ENCODE measurements at regions of chr2 and their contacts with region 1.

Region 1: GRCh38 chr2:85538486-85539360 is at the start of gene MAT2A:
- DNase-seq: peak; percentile 65 to 92 (median 86)
- ATAC-seq: peak; percentile 71
- H3K4me3 ChIP-seq: peak within 1 kb of the TSS; percentile 97
- H3K4me3 Mint-ChIP-seq: peak within 1 kb of the TSS; percentile 94
- H3K27ac ChIP-seq: peak within 1 kb of the TSS; percentile 80 to 84
- H3K27ac Mint-ChIP-seq: peak within 1 kb of the TSS; percentile 92
- H3K4me1 ChIP-seq: peaks cover 29% of the 10 kb centered on the region
- H3K4me1 Mint-ChIP-seq: peaks cover 52% of the 10 kb centered on the region
- H3K27me3 ChIP-seq: no peaks in the 10 kb centered on the region
- H3K27me3 Mint-ChIP-seq: no peaks in the 10 kb centered on the region
- CTCF ChIP-seq: peak; percentile 47
- total RNA-seq, gene MAT2A: 121 to 122 TPM

Region 2: DNA sequence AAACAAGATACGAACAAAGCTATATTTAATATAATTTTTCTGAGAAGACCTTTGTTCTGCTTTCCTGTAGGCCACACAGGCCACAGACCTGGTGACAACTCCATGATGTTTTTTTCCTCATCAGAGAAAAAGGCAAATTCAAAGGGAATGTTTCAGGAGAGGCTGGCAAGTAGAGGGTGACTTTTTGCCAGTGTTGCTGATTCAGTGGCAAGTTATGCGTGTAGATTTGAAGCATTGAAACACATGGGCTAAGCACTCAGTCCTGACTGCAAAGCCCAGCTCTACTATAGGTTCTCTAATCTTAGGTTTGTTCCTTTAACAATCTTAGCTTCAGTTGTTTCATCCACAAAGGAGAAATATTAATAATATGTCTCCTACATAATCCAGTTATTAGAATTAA is 1579.5 kb before region 1 on chr2:
- CTCF ChIA-PET with region 1: no interaction called
- POLR2A ChIA-PET with region 1: no interaction called
- intact Hi-C with region 1: no loop called
- DNase-seq: no peak
- ATAC-seq: no peak
- H3K4me3 ChIP-seq: no peak overlapping the region
- H3K4me3 Mint-ChIP-seq: no peak overlapping the region
- H3K27ac ChIP-seq: no peak overlapping the region
- H3K27ac Mint-ChIP-seq: no peak overlapping the region
- H3K4me1 ChIP-seq: no peaks in the 10 kb centered on the region
- H3K4me1 Mint-ChIP-seq: no peaks in the 10 kb centered on the region
- H3K27me3 ChIP-seq: no peaks in the 10 kb centered on the region
- H3K27me3 Mint-ChIP-seq: no peaks in the 10 kb centered on the region
- CTCF ChIP-seq: no peak

Region 3: DNA sequence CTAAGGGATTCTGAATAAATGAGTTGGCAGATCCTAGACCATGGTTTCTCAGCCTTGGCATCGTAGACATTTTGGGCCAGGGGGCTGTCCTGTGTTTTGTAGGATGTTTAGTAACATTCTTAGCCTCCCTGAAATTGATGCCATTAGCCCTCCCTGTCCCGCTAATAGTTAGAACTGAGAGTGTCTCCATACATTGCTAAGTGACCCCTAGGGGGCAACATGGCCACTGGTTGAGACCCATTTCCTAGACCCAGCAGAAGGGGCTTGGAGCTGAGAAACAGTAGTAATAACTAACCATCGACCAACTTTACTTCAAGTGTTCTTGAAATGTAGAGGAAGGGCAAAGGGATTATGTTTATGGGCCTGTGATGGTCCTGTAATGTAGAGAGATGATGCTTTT is 527.0 kb before region 1 on chr2:
- CTCF ChIA-PET with region 1: no interaction called
- POLR2A ChIA-PET with region 1: no interaction called
- intact Hi-C with region 1: loop called in 1 of 2 experiments (anchors 5 kb)
- DNase-seq: peak in 1 of 14 experiments; percentile 27
- ATAC-seq: no peak
- H3K4me3 ChIP-seq: no peak overlapping the region
- H3K4me3 Mint-ChIP-seq: no peak overlapping the region
- H3K27ac ChIP-seq: no peak overlapping the region
- H3K27ac Mint-ChIP-seq: peak overlapping the region; percentile 22
- H3K4me1 ChIP-seq: peaks cover 28% of the 10 kb centered on the region
- H3K4me1 Mint-ChIP-seq: peaks cover 88% of the 10 kb centered on the region
- H3K27me3 ChIP-seq: no peaks in the 10 kb centered on the region
- H3K27me3 Mint-ChIP-seq: no peaks in the 10 kb centered on the region
- CTCF ChIP-seq: no peak

Region 4: GRCh38 chr2:85420536-85421259 is 118.0 kb before region 1 on chr2:
- CTCF ChIA-PET with region 1: interaction called, 4 read pairs
- POLR2A ChIA-PET with region 1: interaction called, 47 read pairs
- intact Hi-C with region 1: no loop called
- DNase-seq: peak; percentile 78 to 96 (median 88)
- ATAC-seq: peak; percentile 68
- H3K4me3 ChIP-seq: peak overlapping the region; percentile 4
- H3K4me3 Mint-ChIP-seq: peak overlapping the region; percentile 80
- H3K27ac ChIP-seq: no peak overlapping the region
- H3K27ac Mint-ChIP-seq: peak overlapping the region; percentile 14
- H3K4me1 ChIP-seq: peaks cover 33% of the 10 kb centered on the region
- H3K4me1 Mint-ChIP-seq: peaks cover 24% of the 10 kb centered on the region
- H3K27me3 ChIP-seq: no peaks in the 10 kb centered on the region
- H3K27me3 Mint-ChIP-seq: no peaks in the 10 kb centered on the region
- CTCF ChIP-seq: peak; percentile 99

Region 5: DNA sequence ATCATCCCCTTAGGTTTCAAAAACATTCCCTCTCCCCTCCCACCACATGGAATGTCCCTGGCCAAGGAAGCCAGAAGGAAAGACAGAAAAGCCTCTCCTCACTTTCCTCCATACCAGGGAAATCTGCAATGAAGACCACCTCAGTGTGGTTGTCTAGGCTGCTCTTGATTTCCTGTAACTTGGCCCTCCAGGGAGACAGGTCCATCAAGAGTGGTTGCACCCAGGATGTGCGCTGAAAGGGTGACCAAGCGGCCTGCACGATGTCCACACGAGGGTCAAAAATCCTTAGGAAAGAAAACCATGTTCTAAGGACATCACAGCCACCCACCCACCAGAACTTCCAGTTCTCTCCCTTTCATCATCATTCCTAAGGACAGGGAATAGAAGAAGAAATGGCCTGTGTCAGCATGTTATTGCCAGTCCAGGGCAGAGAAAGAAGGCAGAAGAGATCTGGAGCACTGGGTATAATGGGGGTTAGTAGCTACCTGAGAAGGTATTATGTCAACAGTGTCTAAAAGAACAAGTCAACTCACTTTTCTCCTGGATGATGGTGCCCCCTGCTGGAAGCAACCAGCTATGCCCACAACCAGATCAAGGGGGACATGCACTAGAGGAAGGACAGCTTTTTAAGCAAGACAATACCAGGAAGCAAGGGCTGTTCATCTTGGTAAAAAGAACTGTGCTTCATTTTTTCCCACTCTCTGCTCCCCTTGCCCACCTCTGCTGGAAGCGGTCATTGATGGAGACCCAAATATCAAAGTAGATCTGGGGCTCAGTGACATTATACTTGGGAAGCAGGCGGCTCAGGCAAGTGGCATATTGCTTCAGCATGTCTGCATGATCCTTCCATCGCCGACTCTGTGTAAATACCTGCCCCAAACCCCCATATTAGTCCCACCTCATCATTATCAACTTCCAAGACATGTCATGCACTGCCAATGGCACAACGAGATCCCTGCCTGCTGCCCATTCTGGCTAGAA is 13.3 kb after region 1 on chr2:
- CTCF ChIA-PET with region 1: interaction called, 42 read pairs
- POLR2A ChIA-PET with region 1: interaction called, 38 read pairs
- intact Hi-C with region 1: no loop called
- DNase-seq: peak; percentile 83 to 94 (median 89)
- ATAC-seq: peak; percentile 99
- H3K4me3 ChIP-seq: no peak overlapping the region
- H3K4me3 Mint-ChIP-seq: no peak overlapping the region
- H3K27ac ChIP-seq: no peak overlapping the region
- H3K27ac Mint-ChIP-seq: peak overlapping the region; percentile 22
- H3K4me1 ChIP-seq: peaks cover 4% of the 10 kb centered on the region
- H3K4me1 Mint-ChIP-seq: peaks cover 7% of the 10 kb centered on the region
- H3K27me3 ChIP-seq: no peaks in the 10 kb centered on the region
- H3K27me3 Mint-ChIP-seq: no peaks in the 10 kb centered on the region
- CTCF ChIP-seq: peak; percentile 87

Region 6: GRCh38 chr2:85595301-85596025 is 56.7 kb after region 1 on chr2 and contains the start of gene RNF181:
- CTCF ChIA-PET with region 1: interaction called, 3 read pairs
- POLR2A ChIA-PET with region 1: interaction called, 25 read pairs
- intact Hi-C with region 1: no loop called
- DNase-seq: peak; percentile 75 to 97 (median 85)
- ATAC-seq: peak; percentile 99
- H3K4me3 ChIP-seq: peak within 1 kb of the TSS; percentile 94
- H3K4me3 Mint-ChIP-seq: peak within 1 kb of the TSS; percentile 94
- H3K27ac ChIP-seq: peak within 1 kb of the TSS; percentile 78 to 86
- H3K27ac Mint-ChIP-seq: peak within 1 kb of the TSS; percentile 98
- H3K4me1 ChIP-seq: peaks cover 41% of the 10 kb centered on the region
- H3K4me1 Mint-ChIP-seq: peaks cover 35% of the 10 kb centered on the region
- H3K27me3 ChIP-seq: no peaks in the 10 kb centered on the region
- H3K27me3 Mint-ChIP-seq: no peaks in the 10 kb centered on the region
- CTCF ChIP-seq: no peak
- total RNA-seq, gene RNF181: 41.5 to 43.8 TPM

Region 7: GRCh38 chr2:86105252-86105968 is 566.7 kb after region 1 on chr2 and contains the start of gene POLR1A:
- CTCF ChIA-PET with region 1: no interaction called
- POLR2A ChIA-PET with region 1: interaction called, 6 read pairs
- intact Hi-C with region 1: loop called in 1 of 2 experiments (anchors 5 kb)
- DNase-seq: peak; percentile 67 to 93 (median 75)
- ATAC-seq: peak; percentile 75
- H3K4me3 ChIP-seq: peak within 1 kb of the TSS; percentile 80
- H3K4me3 Mint-ChIP-seq: peak within 1 kb of the TSS; percentile 89
- H3K27ac ChIP-seq: peak within 1 kb of the TSS; percentile 81 to 87
- H3K27ac Mint-ChIP-seq: peak within 1 kb of the TSS; percentile 95
- H3K4me1 ChIP-seq: peaks cover 16% of the 10 kb centered on the region
- H3K4me1 Mint-ChIP-seq: peaks cover 60% of the 10 kb centered on the region
- H3K27me3 ChIP-seq: no peaks in the 10 kb centered on the region
- H3K27me3 Mint-ChIP-seq: no peaks in the 10 kb centered on the region
- CTCF ChIP-seq: no peak
- total RNA-seq, gene POLR1A: 13.1 to 13.4 TPM